Right cardiac atrium (tissue), 5 donors: ENCODE measurements at regions of chr18 and their contacts with region 1.

Region 1: DNA sequence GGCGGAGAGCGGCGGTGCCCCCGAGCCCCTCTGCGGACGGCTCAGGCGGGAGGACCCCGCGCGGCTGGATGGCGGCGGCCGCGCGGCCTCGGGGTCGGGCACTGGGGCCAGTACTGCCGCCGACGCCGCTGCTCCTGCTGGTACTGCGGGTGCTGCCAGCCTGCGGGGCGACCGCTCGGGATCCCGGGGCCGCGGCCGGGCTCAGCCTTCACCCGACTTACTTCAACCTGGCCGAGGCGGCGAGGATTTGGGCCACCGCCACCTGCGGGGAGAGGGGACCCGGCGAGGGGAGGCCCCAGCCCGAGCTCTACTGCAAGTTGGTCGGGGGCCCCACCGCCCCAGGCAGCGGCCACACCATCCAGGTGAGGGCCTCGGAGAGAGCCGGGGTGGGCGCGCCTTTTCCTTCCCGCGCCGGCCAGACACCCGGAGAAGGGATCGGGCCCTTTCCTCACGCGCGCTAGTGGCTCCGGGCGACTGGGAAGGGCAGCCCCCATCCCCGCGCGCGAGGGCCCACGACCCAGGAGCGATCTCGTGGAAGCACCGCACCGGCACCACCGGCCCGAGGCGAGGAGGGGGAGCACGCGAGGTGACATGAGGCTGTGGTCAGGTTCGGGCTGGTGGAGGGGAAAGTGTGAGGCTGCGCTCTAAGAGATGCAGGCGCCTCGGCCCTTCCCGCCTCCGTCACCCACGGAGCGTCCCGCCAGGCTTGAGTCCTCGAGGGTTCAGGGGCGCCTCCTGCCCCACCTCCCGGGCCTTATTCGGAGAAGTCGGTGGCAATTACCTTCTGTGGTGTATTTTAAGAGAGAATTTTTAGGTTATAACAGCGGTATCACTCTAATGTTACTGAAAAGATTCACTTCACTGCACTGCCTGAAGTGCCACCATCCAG is 607 bp downstream of the LAMA3 start:
- DNase-seq: peak in 2 of 3 donors; percentile 58 to 72
- ATAC-seq: peak; percentile 35 to 45
- H3K4me3 ChIP-seq: peak overlapping the region; percentile 56
- H3K27ac ChIP-seq: no peak overlapping the region
- H3K4me1 ChIP-seq: no peaks in the 10 kb centered on the region
- H3K27me3 ChIP-seq: no peaks in the 10 kb centered on the region

Region 2: DNA sequence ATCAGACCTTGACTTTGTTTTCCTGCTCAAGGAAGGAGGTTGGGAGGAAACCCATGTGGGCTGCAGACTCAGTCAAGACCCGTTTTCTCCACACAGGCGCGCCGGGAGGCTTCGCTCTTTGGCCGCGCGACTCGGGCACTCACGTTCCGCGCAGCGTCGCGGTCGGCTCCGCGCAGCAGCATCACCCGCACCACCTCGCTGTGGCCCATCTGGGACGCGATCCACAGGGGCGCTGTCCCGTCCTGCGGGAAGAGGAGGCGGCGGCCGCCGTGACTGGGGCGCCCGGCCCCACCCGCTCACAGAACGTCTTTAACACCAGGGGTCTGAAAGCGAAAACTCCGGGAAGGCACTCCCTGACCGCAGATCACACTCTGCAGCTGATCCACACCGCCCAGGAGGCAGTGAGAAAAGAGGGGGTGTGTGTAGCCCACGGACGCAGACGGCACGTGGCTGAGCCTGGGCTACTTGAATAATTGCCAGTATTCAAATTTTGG is 70.4 kb before region 1 on chr18:
- intact Hi-C with region 1: no loop called
- DNase-seq: peak; percentile 42 to 77 (median 65)
- ATAC-seq: peak; percentile 71 to 81
- H3K4me3 ChIP-seq: peak overlapping the region; percentile 42
- H3K27ac ChIP-seq: no peak overlapping the region
- H3K4me1 ChIP-seq: no peaks in the 10 kb centered on the region
- H3K27me3 ChIP-seq: no peaks in the 10 kb centered on the region

Region 3: DNA sequence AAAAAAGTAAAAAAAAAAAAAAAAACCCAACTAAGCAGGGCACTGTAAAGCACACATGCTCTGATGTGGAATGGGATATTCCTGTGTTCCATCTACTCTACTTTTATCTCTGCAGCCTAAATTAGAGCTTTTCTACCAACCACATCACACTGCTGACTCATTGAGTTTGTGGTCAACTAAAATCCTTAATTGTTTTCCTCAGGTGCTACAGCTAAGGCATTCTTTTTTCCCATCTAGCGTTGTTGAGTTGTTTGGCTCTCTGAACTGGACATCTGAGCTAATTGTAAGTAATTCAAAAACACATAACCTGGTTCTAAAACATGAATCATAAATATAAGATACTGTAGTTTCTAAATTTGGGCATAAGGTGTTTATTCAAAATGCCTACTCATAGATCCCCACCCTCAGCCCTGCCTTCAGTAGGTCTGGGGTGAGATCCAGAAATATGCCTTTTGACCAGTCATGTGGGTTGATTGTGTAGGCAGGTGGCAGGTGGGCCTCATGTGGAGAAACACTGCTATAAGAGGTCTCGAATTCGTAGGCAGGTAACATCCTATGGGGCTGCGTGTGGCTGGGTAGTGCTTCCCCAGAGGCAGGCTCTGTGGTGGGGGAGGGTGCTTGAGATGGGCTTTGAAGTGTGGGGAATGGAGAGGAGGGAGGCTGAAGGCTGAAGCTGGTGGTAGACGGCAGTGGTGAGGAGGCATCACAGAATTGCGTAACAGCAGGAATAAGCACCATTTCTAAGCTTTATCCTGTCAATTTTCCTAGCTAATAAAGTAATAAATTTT is 54.4 kb before region 1 on chr18:
- intact Hi-C with region 1: loop called in 1 of 4 experiments (anchors 10 kb)
- DNase-seq: no peak
- ATAC-seq: no peak
- H3K4me3 ChIP-seq: no peak overlapping the region
- H3K27ac ChIP-seq: no peak overlapping the region
- H3K4me1 ChIP-seq: peaks cover 2% of the 10 kb centered on the region
- H3K27me3 ChIP-seq: no peaks in the 10 kb centered on the region